ENCODE measurements at regions of chr16 and their contacts with region 1.

Region 1: DNA sequence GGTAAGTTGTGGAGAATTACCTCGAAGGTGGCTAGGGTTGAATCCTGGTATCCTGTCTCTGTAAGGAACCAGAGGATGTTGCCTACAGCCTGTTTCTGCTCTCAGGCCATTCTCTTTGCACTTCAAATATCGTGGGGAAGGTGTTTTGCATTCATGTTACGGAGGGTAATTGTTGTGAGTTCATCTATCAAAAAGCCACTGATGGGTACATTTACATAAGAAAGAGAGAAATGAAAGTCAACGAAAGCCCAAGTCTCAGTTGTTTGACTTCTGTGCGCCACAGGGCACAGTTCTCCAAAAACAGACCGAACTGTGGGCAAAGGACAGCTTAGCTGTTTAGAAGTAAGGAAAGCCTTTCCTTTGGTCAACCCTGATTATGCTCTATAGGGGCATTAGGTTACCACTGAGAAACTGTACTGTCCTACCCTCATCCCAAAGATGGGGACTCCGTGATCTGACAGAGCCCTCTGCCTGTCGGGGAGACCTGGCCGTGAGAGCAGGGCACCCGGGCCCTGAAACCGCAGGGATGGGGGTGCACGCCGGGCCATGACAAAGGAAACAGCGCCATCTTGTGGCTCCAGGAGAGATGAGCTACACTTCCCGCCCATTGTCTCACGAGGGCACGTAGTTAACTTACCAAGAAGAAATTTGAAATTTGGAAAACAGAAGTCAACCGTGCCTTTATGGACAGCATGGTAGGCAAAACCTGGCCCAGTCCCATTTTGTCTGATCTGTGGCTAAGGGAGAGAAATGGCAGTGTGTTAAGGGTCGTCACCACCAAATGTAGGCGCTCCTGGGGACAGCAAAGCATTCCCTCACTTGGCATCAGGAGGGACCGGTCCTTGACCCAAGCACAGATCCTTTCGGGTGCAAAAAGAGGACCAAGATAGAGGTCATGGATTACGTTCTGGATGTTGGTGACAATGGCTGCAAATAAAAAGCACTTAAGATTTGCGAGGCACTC is 74.5 kb upstream of the DYNLRB2 start:
- DNase-seq: peak; percentile 6
- ATAC-seq: peak; percentile 62; the same call in 1 of the 2 replicates
- H3K4me3 ChIP-seq: no peak overlapping the region
- H3K27ac ChIP-seq: no peak overlapping the region
- H3K4me1 ChIP-seq: no peaks in the 10 kb centered on the region
- H3K27me3 ChIP-seq: no peaks in the 10 kb centered on the region
- CTCF ChIP-seq: peak; percentile 5 to 91 (median 58); a peak in 4 of 6 replicates
- POLR2A ChIP-seq: no peak
- RAD21 ChIP-seq: peak; percentile 59

Region 2: DNA sequence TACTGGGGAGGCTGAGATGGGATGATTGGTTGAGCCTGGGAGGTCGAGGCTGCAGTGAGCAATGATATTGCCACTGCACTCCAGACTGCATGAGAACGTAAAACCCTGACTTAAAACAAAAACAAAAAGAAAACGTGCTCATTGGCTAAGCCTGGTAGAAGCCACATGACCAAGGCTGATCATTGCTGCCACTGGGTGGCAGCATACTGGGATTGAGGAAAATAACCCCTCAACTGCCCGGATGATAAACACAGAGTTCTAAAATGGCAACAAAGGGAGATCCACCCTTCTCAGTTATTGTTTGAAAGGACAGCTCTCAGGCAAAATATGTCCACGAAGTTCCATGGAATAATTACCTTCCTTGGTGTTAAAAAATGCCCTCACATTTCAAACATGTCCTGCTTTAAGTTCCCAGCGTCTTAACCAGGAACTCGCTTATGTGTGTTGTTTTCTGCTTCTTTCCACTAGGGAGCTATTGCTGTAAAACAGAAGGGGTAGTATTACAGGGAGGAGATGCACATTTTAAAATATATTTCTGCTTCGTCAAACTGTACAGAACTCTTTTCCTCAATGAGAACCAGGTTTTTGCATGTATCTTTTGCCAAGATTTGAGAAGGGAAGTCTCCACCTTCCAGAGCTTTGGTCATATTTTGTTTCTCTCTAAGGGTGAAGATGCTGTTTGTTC is 1541.1 kb before region 1 on chr16:
- CTCF ChIA-PET with region 1: no interaction called
- POLR2A ChIA-PET with region 1: no interaction called
- RAD21 ChIA-PET with region 1: no interaction called
- intact Hi-C with region 1: loop called (anchors 10 kb)
- DNase-seq: peak; percentile 31
- ATAC-seq: peak; percentile 90
- H3K4me3 ChIP-seq: no peak overlapping the region
- H3K27ac ChIP-seq: no peak overlapping the region
- H3K4me1 ChIP-seq: no peaks in the 10 kb centered on the region
- H3K27me3 ChIP-seq: no peaks in the 10 kb centered on the region
- CTCF ChIP-seq: peak; percentile 37 to 73 (median 65); a peak in 5 of 6 replicates
- POLR2A ChIP-seq: no peak
- RAD21 ChIP-seq: peak; percentile 36

Region 3: GRCh38 chr16:79571065-79571902 is 895.0 kb before region 1 on chr16:
- CTCF ChIA-PET with region 1: no interaction called
- POLR2A ChIA-PET with region 1: no interaction called
- RAD21 ChIA-PET with region 1: no interaction called
- intact Hi-C with region 1: no loop called
- DNase-seq: no peak
- ATAC-seq: no peak
- H3K4me3 ChIP-seq: no peak overlapping the region
- H3K27ac ChIP-seq: no peak overlapping the region
- H3K4me1 ChIP-seq: no peaks in the 10 kb centered on the region
- H3K27me3 ChIP-seq: no peaks in the 10 kb centered on the region
- CTCF ChIP-seq: no peak
- POLR2A ChIP-seq: no peak
- RAD21 ChIP-seq: no peak

Region 4: DNA sequence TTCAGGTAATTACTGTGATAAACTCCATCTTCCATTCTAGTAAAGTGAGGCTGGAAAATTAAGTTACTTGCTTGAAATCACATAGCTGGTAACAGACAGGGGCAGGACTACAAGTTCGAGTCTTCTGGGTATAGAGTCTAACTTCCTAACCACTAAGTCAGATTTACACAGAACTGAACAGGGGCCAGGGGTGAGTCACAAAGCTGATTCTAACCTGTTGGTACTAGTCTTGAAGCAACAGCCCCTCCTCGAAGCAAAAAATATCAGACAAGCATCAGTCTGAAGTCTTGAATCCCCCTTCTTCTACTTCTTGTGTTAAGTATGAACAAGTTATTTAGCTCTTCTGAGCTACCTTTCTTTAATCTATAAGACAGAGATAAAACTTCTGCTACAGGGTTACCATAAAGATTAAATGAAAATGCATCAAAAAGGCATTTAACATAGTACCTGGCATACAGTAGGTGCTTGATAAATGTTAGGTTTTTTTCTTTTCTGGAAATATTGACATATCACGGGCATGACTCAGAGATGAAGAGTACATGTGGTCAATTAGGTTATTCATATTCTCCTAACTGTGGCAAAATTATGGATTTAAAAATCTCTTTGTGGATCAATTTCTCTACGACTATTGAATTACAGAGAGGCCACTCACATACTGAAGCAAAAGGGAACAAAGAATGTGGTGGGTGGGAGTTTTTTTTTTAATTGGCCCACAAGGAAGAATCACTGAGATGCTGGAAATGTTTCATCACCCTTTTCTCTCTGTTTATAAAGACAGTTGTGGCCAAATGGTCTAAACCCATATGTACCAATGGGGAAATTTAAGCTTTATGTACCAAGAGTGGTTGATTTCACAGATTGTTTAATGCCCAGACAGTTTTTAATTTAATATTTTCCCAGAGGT is 192.4 kb before region 1 on chr16:
- CTCF ChIA-PET with region 1: no interaction called
- POLR2A ChIA-PET with region 1: no interaction called
- RAD21 ChIA-PET with region 1: no interaction called
- intact Hi-C with region 1: no loop called
- DNase-seq: no peak
- ATAC-seq: no peak
- H3K4me3 ChIP-seq: no peak overlapping the region
- H3K27ac ChIP-seq: no peak overlapping the region
- H3K4me1 ChIP-seq: no peaks in the 10 kb centered on the region
- H3K27me3 ChIP-seq: no peaks in the 10 kb centered on the region
- CTCF ChIP-seq: no peak
- POLR2A ChIP-seq: no peak
- RAD21 ChIP-seq: no peak

Region 5: DNA sequence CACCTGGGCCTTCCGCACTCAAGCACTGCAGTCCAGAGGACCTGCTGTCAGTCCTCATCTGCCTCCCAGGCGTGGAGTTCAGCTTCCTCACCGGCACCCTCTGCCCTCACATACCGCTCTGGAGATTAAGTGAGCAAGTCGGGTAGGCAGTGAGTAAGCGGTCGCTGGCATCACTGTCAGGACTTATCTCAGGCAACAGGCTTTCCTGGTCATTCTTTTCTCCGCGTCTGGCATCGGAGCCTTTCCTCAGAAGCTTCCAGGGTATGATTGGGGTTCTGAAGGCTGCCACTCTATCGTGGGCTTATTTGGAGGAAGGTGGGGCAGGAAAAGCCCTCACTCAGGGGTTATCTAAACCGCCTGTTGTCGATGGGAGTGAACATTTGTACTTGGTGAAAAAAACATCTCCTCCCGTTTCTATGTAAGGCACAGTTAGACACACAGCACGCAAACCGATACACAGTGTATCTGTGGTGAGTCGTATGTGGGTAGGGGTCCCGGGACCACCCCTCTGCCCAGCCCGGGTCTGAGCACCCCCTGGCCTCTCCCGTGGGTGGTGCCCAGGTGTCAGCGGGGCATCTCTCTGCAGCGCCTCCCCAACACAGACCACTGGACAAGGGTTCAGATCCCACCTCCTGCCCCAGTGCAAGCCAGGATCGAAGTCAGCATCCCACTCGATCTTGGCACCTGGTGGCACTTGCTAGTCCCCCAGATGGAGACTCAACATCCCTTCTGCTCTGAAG is 1220.3 kb after region 1 on chr16:
- CTCF ChIA-PET with region 1: no interaction called
- POLR2A ChIA-PET with region 1: no interaction called
- RAD21 ChIA-PET with region 1: no interaction called
- intact Hi-C with region 1: no loop called
- DNase-seq: no peak
- ATAC-seq: no peak
- H3K4me3 ChIP-seq: no peak overlapping the region
- H3K27ac ChIP-seq: no peak overlapping the region
- H3K4me1 ChIP-seq: no peaks in the 10 kb centered on the region
- H3K27me3 ChIP-seq: no peaks in the 10 kb centered on the region
- CTCF ChIP-seq: no peak
- POLR2A ChIP-seq: no peak
- RAD21 ChIP-seq: no peak

Measured in HCT116 (cell line).